ENCODE measurements at regions of chrX and their contacts with region 1.

Region 1: GRCh38 chrX:120560842-120561633 is at the start of gene CUL4B:
- DNase-seq: peak; percentile 97
- H3K4me3 ChIP-seq: peak within 1 kb of the TSS; percentile 60 to 65 (median 62)
- H3K27ac ChIP-seq: peak within 1 kb of the TSS; percentile 95 to 98 (median 96)
- H3K4me1 ChIP-seq: peaks cover 0 to 26% (median 5%) of the 10 kb centered on the region in 4 donors
- H3K27me3 ChIP-seq: no peaks in the 10 kb centered on the region
- CTCF ChIP-seq: no peak
- EP300 ChIP-seq: peak in 3 of 4 donors; percentile 35 to 46 (median 39)
- POLR2A ChIP-seq: peak; percentile 50 to 69
- total RNA-seq, gene CUL4B: 46.2 to 62.0 (median 49.9) TPM

Region 2: GRCh38 chrX:120029354-120029753 is 531.7 kb before region 1 on chrX:
- intact Hi-C with region 1: no loop called
- DNase-seq: no peak
- H3K4me3 ChIP-seq: no peak overlapping the region
- H3K27ac ChIP-seq: no peak overlapping the region
- H3K4me1 ChIP-seq: no peaks in the 10 kb centered on the region
- H3K27me3 ChIP-seq: no peaks in the 10 kb centered on the region
- CTCF ChIP-seq: no peak
- EP300 ChIP-seq: no peak
- POLR2A ChIP-seq: no peak

Region 3: DNA sequence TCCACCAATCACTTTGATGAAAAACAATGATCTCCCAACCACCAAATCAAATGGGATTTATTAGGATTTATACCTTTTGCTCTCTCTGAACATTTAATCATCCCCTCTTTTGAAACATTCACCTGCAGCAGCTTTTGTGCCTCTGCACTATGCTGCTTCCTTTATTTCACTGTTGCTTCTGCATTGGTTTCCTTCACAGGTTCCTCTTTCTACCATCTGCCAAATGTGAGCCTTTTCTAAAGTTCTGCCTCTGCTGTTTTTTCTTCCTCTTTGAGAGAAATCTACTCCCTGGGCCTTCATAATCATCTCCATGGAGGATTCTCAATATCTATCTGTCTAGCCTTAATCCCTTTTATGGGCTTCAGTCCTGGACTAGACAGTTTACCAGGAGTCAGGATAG is 25.0 kb before region 1 on chrX:
- intact Hi-C with region 1: no loop called
- DNase-seq: no peak
- H3K4me3 ChIP-seq: no peak overlapping the region
- H3K27ac ChIP-seq: no peak overlapping the region
- H3K4me1 ChIP-seq: no peaks in the 10 kb centered on the region
- H3K27me3 ChIP-seq: no peaks in the 10 kb centered on the region
- CTCF ChIP-seq: no peak
- EP300 ChIP-seq: no peak
- POLR2A ChIP-seq: no peak

Region 4: GRCh38 chrX:120603707-120604360 is 42.8 kb after region 1 on chrX and contains the start of gene MCTS1:
- intact Hi-C with region 1: loop called (anchors 2 kb)
- DNase-seq: peak; percentile 93
- H3K4me3 ChIP-seq: peak within 1 kb of the TSS; percentile 47 to 57 (median 56)
- H3K27ac ChIP-seq: peak within 1 kb of the TSS; percentile 75 to 90 (median 84)
- H3K4me1 ChIP-seq: peaks cover 0 to 11% (median 6%) of the 10 kb centered on the region in 4 donors
- H3K27me3 ChIP-seq: no peaks in the 10 kb centered on the region
- CTCF ChIP-seq: no peak
- EP300 ChIP-seq: peak in 2 of 4 donors; percentile 27 to 53
- POLR2A ChIP-seq: peak; percentile 25 to 40
- total RNA-seq, gene MCTS1: 14.7 to 25.7 (median 20.7) TPM

Region 5: GRCh38 chrX:120629667-120630537 is 68.9 kb after region 1 on chrX and contains the start of gene C1GALT1C1:
- intact Hi-C with region 1: loop called (anchors 1 kb)
- DNase-seq: peak; percentile 97
- H3K4me3 ChIP-seq: peak within 1 kb of the TSS; percentile 55 to 67 (median 62)
- H3K27ac ChIP-seq: peak within 1 kb of the TSS; percentile 86 to 93 (median 88)
- H3K4me1 ChIP-seq: peaks cover 0 to 5% (median 2%) of the 10 kb centered on the region in 4 donors
- H3K27me3 ChIP-seq: no peaks in the 10 kb centered on the region
- CTCF ChIP-seq: no peak
- EP300 ChIP-seq: no peak
- POLR2A ChIP-seq: peak; percentile 12 to 25
- total RNA-seq, gene C1GALT1C1: 16.6 to 29.3 (median 22.2) TPM